ENCODE measurements at regions of chr17 and their contacts with region 1.

Region 1: DNA sequence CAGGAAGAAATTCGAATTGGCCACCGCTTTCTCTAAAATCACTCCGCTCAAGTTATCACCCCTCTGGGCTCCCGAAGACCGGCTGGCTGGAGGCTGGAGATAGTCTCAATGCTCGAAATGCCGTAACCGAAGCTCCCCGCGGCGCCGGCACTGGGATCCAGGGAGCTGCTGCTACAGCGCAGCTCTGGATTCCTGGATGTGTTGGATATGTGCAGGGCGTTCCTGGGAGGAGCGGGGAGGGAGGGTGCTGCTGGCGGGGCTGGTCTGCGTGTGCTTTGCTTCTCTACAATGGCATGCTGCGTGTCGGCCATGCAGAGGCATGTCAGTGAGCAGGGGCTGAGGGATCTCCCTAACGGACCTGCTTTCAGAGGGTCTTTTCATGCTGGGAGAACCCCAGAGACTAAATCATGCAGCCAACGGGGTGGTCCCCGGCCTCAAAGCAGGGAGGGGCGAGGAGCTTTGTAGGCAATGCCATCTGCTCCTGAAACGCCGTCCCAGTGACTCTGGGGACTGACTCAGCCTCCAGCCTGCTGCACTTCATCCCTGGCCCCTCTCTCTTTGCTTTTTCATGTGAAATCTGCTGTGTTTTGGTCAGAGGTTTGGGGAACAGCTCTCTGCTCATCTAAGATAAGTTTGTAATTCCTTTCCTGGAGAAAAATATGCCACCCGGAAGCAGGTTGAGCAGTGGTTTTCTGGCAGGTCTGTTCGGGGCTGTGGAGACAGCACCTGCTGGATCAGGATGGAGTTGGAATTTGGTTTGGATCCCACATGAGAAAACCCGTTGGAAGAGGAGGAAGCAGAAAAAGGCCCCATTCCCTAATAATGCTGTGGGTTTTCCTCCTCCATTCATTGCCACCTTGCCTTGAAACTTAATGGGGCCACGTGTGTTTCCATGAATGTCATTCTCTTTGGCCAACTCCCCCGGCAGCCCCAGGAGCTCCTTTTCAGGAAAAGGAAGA is 311.4 kb downstream of the SEC14L1 start:
- DNase-seq: peak; percentile 94
- H3K4me3 ChIP-seq: peak overlapping the region; percentile 47 to 60 (median 57)
- H3K27ac ChIP-seq: peak overlapping the region; percentile 95 to 99 (median 96)
- H3K4me1 ChIP-seq: peaks cover 0 to 93% (median 87%) of the 10 kb centered on the region in 4 donors
- H3K27me3 ChIP-seq: no peaks in the 10 kb centered on the region
- CTCF ChIP-seq: no peak
- EP300 ChIP-seq: no peak
- POLR2A ChIP-seq: peak; percentile 78 to 92

Region 2: DNA sequence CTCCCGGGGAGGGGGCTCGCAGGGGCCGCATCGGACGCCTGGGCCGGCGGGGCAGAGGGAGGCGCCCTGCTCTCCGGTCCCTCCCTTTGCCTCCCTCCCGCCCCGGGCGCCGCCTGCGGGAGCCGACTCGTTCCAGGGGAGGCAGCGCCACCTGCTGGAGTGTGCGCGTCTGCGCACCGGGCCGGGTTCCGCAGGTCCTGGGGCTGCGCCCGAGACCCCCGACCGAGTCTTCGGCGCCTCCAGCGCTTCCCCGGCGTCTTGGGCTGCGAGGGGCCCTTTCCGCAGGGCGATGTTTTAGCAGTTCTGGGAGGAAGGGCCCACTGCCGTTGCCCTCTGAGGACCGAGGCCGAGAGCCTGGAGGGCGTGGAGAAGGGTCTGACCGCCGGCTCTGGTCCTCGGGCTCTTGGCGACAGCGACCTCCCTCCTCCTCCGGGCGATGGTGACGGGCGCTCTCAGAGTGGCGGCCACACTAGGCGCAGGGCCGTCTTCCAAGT is 205.1 kb before region 1 on chr17:
- intact Hi-C with region 1: no loop called
- DNase-seq: peak; percentile 91
- H3K4me3 ChIP-seq: peak overlapping the region; percentile 44 to 64 (median 58)
- H3K27ac ChIP-seq: peak overlapping the region in 2 of 4 donors; percentile 60 to 66
- H3K4me1 ChIP-seq: peaks cover 0 to 13% (median 12%) of the 10 kb centered on the region in 4 donors
- H3K27me3 ChIP-seq: peaks cover 0 to 7% (median 0%) of the 10 kb centered on the region in 3 donors
- CTCF ChIP-seq: peak; percentile 95 to 99 (median 98)
- EP300 ChIP-seq: no peak
- POLR2A ChIP-seq: no peak

Region 3: GRCh38 chr17:77471984-77472461 is 19.9 kb after region 1 on chr17:
- intact Hi-C with region 1: loop called (anchors 2 kb)
- DNase-seq: peak; percentile 87
- H3K4me3 ChIP-seq: no peak overlapping the region
- H3K27ac ChIP-seq: peak overlapping the region; percentile 85 to 92 (median 91)
- H3K4me1 ChIP-seq: peaks cover 0 to 95% (median 79%) of the 10 kb centered on the region in 4 donors
- H3K27me3 ChIP-seq: no peaks in the 10 kb centered on the region
- CTCF ChIP-seq: no peak
- EP300 ChIP-seq: no peak
- POLR2A ChIP-seq: no peak

Measured in sigmoid colon (tissue), 7 donors.